Psoas muscle (tissue), 8 donors: ENCODE measurements at regions of chr7 and their contacts with region 1.

Region 1: DNA sequence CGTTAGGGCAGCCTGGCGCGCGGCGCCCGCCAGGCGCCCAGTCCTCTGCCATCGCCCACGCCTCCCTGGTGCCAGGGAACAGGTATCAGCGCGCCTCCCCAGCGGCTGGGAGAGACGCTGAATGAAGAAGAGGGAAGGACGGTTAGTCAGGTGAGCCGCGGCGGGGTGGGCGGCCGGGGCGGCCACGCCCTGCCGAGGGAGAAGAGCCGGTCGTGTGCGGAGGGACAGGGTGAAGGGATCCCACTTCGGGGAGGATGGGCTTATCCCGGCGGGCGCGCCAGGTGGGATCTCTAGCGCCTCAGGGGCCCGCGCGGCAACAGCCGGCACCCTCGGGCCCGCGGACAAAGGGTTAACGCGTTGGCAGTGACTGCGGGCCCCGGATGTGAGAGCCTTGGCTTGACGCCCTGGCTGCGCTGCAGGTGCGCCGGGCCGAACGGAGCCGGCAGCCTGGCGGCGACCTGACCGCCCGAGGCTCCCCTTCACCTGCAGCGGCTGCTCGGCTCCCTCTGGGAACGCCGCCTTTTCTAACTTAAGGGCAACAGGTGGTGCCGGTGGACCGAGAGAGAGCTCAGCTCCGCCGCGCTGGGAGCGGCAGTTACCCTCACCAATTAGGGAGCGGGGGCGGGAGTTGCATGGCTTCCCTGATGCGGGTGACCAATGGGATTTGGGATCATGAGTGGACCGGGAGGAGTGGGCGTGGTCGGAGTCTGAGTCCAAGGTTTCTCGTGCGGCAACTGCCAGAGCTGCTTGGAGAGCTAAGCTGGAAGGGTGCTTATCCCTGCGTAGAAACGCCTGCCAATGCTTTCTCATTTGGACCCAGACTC is at the start of gene ARL4A:
- DNase-seq: peak; percentile 98
- ATAC-seq: peak; percentile 96
- H3K4me3 ChIP-seq: peak within 1 kb of the TSS; percentile 97
- H3K27ac ChIP-seq: peak within 1 kb of the TSS; percentile 83
- H3K4me1 ChIP-seq: peaks cover 6% of the 10 kb centered on the region
- H3K27me3 ChIP-seq: no peaks in the 10 kb centered on the region
- CTCF ChIP-seq: peak; percentile 11
- total RNA-seq, gene ARL4A: 2.5 to 15.3 (median 5.2) TPM

Region 2: DNA sequence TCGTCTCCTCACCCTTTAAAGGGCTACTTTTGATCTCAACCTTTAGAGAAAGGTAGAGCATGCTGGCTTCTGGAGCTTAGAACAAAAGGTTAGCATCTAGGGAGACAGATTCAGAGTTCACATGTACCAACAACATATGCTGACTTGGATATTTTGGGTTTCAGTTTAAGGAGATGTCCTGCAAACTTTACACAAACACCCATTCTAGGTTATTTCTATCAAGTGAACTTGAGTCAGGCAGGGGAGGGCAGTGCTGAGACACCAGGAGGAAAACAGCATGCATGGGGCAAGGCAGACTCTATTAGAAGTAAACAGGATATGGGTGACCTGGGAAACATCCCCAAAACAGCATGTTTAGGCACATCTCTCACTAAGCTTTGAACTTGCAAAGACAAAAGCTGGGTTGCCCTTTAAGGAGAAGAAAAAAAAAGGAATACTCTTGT is 44.1 kb after region 1 on chr7:
- intact Hi-C with region 1: loop called in 1 of 2 experiments (anchors 5 kb)
- DNase-seq: no peak
- ATAC-seq: no peak
- H3K4me3 ChIP-seq: no peak overlapping the region
- H3K27ac ChIP-seq: no peak overlapping the region
- H3K4me1 ChIP-seq: peaks cover 5% of the 10 kb centered on the region
- H3K27me3 ChIP-seq: no peaks in the 10 kb centered on the region
- CTCF ChIP-seq: no peak

Region 3: DNA sequence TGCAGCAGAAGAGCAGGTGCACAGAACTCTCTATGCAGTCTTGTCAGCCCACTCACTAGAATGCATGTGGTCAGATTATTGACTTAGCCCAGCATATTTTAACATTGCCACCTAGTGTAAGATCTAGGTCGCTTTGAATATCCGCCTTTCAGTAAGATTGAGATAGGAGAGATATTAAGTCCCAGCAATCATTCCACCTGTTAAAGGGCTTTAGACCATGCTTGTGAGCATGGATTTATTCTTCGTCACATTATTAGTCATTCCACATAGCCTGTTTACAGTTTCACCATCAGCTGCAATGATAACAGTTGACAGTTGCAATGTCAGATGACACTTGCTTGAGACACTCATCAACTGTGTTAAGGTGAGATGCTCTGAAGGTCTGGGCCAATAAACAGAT is 492.0 kb after region 1 on chr7:
- intact Hi-C with region 1: loop called in 1 of 2 experiments (anchors 5 kb)
- DNase-seq: no peak
- ATAC-seq: peak; percentile 65 to 94 (median 88)
- H3K4me3 ChIP-seq: no peak overlapping the region
- H3K27ac ChIP-seq: no peak overlapping the region
- H3K4me1 ChIP-seq: no peaks in the 10 kb centered on the region
- H3K27me3 ChIP-seq: no peaks in the 10 kb centered on the region
- CTCF ChIP-seq: no peak